ENCODE measurements at regions of chr6 and their contacts with region 1.

Region 1: GRCh38 chr6:217048-217659 is 75.1 kb upstream of the DUSP22 start:
- DNase-seq: peak; percentile 80
- H3K4me3 ChIP-seq: no peak overlapping the region
- H3K27ac ChIP-seq: peak overlapping the region; percentile 91
- H3K4me1 ChIP-seq: peaks cover 70% of the 10 kb centered on the region
- CTCF ChIP-seq: peak; percentile 95

Region 2: DNA sequence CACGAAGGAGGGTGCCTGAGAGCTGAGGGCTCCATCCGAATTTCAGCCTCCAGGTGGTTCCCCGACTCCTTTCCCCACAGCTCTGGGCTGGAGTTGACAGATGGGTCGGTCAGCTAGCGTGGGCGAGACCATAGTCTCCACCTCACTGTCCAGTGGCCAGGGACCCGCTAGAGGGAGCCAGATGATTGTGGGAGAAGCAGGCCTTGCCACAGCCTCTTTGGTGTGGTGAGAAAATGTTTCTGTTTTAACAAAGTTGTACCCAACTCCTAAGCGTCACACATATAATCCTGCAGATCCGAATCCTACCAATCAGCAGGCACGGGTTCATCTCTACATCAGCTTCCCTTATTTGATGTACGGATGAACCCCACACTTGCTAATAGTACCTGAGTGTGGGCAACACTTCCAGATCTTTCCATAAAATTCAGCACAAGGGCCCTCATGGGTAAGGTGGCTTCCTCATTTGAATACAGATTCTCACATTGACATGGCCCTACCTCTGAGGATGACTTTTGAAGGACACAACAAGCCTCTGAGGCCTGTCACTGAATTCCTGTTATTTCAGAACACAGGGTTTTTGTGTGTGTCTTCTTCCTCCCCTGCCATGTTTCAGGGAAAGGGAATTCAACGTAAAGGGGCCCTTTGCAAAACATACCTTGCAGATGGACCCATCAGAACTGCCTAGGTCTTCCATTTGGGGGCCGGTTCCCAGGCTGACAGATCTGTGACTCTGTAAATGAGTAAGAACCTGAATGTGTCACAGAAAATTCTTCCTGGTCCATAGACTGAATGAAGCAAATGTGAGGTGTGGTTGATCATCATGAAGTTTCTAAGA is 28.1 kb before region 1 on chr6:
- CTCF ChIA-PET with region 1: interaction called, 8 read pairs
- POLR2A ChIA-PET with region 1: interaction called, 12 read pairs
- intact Hi-C with region 1: no loop called
- DNase-seq: peak; percentile 89
- H3K4me3 ChIP-seq: no peak overlapping the region
- H3K27ac ChIP-seq: peak overlapping the region; percentile 24
- H3K4me1 ChIP-seq: peaks cover 87% of the 10 kb centered on the region
- CTCF ChIP-seq: peak; percentile 98

Region 3: DNA sequence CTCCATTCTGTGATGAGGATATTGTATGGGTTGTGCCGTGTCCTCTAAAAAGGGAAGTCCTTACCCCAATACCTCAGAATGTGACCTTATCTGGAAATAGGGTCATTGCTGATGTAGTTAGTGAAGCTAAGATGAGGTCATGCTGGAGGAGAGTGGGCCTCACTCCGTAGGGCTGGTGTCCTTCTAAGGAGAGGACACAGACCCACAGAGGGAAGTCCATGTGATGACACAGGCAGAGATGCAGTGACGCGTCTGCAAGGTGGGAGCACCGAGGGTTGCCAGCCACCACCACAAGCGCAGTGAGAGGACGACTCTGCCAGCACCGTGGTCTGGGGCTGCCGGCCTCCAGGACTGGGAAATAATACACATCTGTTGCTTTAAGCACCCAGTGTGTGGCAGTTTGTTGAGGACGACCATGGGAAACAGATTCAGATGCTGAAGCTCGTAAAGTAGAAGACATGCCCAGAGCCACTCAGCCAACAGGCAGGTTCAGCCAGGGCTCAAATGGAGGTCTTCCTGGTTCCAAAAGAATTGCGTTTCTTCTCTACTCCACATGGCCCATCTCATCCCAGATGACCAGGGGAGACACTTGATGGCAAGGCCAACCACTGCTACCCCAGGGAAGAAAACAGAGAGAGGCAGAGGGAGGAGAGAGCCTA is 16.0 kb after region 1 on chr6:
- CTCF ChIA-PET with region 1: interaction called, 5 read pairs
- POLR2A ChIA-PET with region 1: interaction called, 12 read pairs
- intact Hi-C with region 1: no loop called
- DNase-seq: no peak
- H3K4me3 ChIP-seq: no peak overlapping the region
- H3K27ac ChIP-seq: no peak overlapping the region
- H3K4me1 ChIP-seq: peaks cover 27% of the 10 kb centered on the region
- CTCF ChIP-seq: no peak

Region 4: GRCh38 chr6:286681-287488 is 69.7 kb after region 1 on chr6:
- CTCF ChIA-PET with region 1: interaction called, 16 read pairs
- POLR2A ChIA-PET with region 1: interaction called, 6 read pairs
- intact Hi-C with region 1: loop called (anchors 1 kb)
- DNase-seq: peak; percentile 31
- H3K4me3 ChIP-seq: no peak overlapping the region
- H3K27ac ChIP-seq: no peak overlapping the region
- H3K4me1 ChIP-seq: peaks cover 49% of the 10 kb centered on the region
- CTCF ChIP-seq: no peak

Region 5: DNA sequence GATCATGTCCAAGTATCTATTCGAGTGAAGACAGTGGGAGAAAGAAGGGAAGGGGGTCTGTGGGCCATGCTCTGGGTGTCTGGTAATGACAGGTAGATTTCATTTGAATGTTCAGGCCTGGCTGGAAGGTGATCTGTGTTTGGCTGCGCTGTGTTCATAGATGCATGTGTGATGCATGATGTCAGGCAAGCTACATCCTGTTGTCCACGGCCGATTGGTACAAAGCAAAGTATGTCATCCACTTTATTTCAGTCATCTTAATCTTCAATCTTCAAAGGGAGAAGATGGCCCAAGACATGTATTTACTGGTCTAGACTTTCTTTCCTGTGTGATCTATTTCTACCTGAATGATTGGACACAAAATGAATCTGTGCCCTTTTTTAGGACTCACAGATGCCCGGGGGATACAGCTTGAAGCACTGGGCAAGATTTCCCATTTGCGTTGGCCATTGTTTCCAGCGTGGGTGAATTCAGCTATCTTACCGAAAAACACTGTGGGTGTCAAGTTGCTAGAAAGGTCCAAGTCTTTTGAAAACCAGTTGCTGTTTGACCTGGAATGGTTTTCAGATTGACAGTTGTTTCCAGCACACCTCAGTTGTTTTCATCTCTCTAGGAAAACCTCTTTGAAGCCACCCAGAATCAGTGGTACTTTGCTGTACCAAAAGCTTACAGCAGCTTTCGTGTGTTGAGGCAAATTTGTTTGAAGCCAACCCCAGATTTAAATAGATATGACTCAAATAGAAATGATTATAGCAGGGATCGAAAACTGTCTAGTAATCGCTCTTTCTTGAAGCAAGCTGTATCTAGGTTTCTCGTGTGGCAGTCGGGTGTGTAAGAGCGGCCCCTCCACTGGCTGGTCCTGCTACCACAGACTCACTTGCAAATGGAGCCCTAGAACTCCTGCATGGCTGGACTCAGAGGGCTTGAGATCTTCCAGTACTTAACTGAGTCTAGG is 102.3 kb after region 1 on chr6:
- CTCF ChIA-PET with region 1: interaction called, 17 read pairs
- POLR2A ChIA-PET with region 1: interaction called, 27 read pairs
- intact Hi-C with region 1: loop called (anchors 2 kb)
- DNase-seq: no peak
- H3K4me3 ChIP-seq: no peak overlapping the region
- H3K27ac ChIP-seq: no peak overlapping the region
- H3K4me1 ChIP-seq: peaks cover 100% of the 10 kb centered on the region
- CTCF ChIP-seq: no peak

Region 6: GRCh38 chr6:356828-357251 is 139.7 kb after region 1 on chr6:
- CTCF ChIA-PET with region 1: interaction called, 7 read pairs
- POLR2A ChIA-PET with region 1: interaction called, 13 read pairs
- intact Hi-C with region 1: no loop called
- DNase-seq: peak; percentile 83
- H3K4me3 ChIP-seq: peak overlapping the region; percentile 10
- H3K27ac ChIP-seq: peak overlapping the region; percentile 86
- H3K4me1 ChIP-seq: peaks cover 100% of the 10 kb centered on the region
- CTCF ChIP-seq: no peak

Region 7: DNA sequence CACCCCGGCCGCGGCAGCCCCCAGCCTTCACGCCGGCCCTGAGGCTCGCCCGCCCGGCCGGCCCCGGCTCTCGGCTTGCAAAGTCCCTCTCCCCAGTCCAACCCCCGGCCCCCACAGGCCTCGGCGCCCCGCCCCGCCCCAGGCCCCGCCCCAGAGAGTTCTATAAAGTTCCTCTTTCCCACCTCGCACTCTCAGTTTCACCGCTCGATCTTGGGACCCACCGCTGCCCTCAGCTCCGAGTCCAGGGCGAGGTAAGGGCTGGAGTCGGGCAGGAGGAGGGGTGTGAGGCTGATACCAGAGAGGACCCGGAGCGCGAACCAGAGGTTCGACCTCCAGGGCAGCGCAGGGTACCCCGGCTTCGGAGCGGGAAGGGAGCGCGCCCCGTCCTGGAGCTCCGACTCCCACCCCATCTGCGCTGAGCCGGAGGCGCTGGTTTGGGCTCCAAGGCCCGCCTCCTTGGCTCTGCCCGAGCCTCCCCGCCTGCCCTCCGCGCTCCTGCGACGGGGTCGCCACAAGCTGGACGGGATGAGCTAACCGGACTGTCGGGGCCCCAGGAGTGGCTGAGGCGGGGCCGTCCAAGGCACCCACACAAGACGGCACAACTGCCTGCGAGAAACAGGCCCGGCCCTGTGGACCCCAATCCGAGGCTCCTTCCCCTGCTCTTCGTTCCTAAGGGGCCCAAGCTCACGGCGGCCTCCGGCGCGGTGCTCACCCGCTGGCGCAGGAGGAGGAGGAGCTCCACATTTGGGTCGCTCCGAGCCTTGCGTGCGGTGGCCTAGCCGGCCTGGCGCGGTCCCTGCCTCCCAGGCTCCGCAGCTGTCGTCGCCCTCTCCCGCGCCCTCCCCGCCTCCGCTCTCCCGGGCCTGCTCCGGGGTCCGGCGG is 174.6 kb after region 1 on chr6 and contains the start of gene IRF4:
- CTCF ChIA-PET with region 1: interaction called, 3 read pairs
- POLR2A ChIA-PET with region 1: interaction called, 7 read pairs
- intact Hi-C with region 1: loop called (anchors 1 kb)
- DNase-seq: peak; percentile 84
- H3K4me3 ChIP-seq: peak within 1 kb of the TSS; percentile 98
- H3K27ac ChIP-seq: peak within 1 kb of the TSS; percentile 57
- H3K4me1 ChIP-seq: peaks cover 49% of the 10 kb centered on the region
- CTCF ChIP-seq: no peak
- total RNA-seq, gene IRF4: 143 and 189 TPM in 2 replicates

Region 8: DNA sequence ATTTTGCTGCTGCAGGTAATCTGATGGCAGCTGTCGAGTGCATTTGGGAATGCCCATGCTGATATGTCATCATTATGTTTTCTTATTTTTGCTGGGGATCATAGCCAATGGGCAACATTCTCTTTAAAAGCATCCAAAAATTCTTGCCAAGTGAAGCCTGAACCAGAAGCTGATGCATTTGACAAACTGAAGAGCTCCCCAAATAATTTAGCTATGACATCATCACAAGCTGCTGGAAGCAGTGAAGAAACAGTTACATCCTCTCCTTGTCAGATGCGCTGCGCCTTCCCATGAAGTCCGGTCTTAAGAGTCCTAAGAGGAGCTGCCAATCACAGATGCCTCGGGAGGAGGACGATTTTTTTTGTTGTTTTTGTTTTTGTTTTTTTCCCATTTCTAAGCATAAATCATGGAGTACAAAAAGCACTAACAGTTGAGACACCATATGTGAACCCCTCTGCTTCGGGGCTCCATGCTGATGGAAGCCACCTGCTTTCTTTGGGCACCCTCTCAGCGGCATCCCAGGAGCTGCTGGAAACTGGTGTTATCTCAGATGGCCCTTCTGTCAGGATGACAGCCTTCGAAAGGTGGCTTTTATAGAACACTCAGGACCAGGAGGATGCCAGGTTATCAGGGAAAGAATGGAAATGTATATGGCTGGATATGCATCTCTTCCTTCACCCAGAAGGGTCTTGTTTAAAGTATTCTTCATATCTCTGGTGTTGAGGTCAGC is 1038.6 kb after region 1 on chr6:
- CTCF ChIA-PET with region 1: no interaction called
- POLR2A ChIA-PET with region 1: no interaction called
- intact Hi-C with region 1: no loop called
- DNase-seq: no peak
- H3K4me3 ChIP-seq: no peak overlapping the region
- H3K27ac ChIP-seq: no peak overlapping the region
- H3K4me1 ChIP-seq: no peaks in the 10 kb centered on the region
- CTCF ChIP-seq: no peak